CD4-positive, alpha-beta T cell (primary cell): ENCODE measurements at regions of chr6 and their contacts with region 1.

Region 1: DNA sequence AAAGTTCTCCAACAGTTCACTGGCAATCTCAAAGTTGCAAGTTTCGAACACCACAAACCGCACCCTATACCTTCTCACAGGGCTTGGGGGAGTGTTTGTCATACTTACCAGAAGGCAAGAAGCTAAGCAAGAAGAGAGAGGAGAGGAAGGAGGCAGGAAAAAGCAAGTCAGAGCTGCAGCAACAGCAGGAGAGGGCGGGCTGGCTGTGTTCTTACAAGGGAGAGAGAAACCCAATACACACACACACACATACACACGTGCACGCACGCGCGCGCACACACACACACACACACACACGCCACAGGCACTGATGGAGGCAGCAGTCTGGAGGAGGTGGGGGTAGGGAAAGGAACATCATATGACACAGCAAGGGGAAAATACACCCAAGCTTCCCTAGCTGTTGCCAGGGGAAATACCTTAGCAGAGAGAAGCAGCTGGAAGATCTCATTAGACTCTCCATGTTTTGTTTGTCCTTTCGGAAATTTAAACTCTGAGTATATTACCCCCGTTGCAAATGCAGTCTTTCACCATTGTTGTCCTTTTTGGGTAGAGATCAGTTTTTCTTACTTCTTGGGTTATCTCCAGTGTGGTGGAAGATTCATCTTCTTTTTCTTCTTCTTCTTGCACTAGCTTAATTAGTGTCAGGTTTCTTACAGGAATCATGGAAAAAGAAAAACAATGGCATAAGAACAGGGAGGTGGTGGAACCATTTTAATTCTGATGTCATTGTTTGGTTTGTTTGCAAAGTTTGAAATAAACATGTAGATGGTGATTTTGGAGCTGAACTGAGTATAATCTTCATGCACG is at the start of gene TXLNB:
- DNase-seq: peak; percentile 66 to 93 (median 78)
- ATAC-seq: peak; percentile 94
- H3K4me3 ChIP-seq: peak within 1 kb of the TSS; percentile 34
- H3K4me3 Mint-ChIP-seq: peak within 1 kb of the TSS; percentile 83
- H3K27ac ChIP-seq: peak within 1 kb of the TSS; percentile 68 to 80
- H3K27ac Mint-ChIP-seq: peak within 1 kb of the TSS; percentile 84
- H3K4me1 ChIP-seq: peaks cover 47% of the 10 kb centered on the region
- H3K4me1 Mint-ChIP-seq: peaks cover 62% of the 10 kb centered on the region
- H3K27me3 ChIP-seq: no peaks in the 10 kb centered on the region
- H3K27me3 Mint-ChIP-seq: no peaks in the 10 kb centered on the region
- CTCF ChIP-seq: no peak
- total RNA-seq, gene TXLNB: 0.17 to 0.19 TPM

Region 2: GRCh38 chr6:139124887-139125672 is 166.9 kb before region 1 on chr6:
- CTCF ChIA-PET with region 1: interaction called, 13 read pairs
- POLR2A ChIA-PET with region 1: interaction called, 12 read pairs
- intact Hi-C with region 1: loop called in 1 of 2 experiments (anchors 5 kb)
- DNase-seq: peak; percentile 60 to 95 (median 76)
- ATAC-seq: peak; percentile 98
- H3K4me3 ChIP-seq: peak overlapping the region; percentile 1
- H3K4me3 Mint-ChIP-seq: peak overlapping the region; percentile 66
- H3K27ac ChIP-seq: peak overlapping the region; percentile 64 to 66
- H3K27ac Mint-ChIP-seq: peak overlapping the region; percentile 88
- H3K4me1 ChIP-seq: peaks cover 40% of the 10 kb centered on the region
- H3K4me1 Mint-ChIP-seq: peaks cover 57% of the 10 kb centered on the region
- H3K27me3 ChIP-seq: no peaks in the 10 kb centered on the region
- H3K27me3 Mint-ChIP-seq: no peaks in the 10 kb centered on the region
- CTCF ChIP-seq: peak; percentile 80

Region 3: GRCh38 chr6:139187489-139187888 is 104.5 kb before region 1 on chr6:
- CTCF ChIA-PET with region 1: no interaction called
- POLR2A ChIA-PET with region 1: no interaction called
- intact Hi-C with region 1: no loop called
- DNase-seq: no peak
- ATAC-seq: no peak
- H3K4me3 ChIP-seq: no peak overlapping the region
- H3K4me3 Mint-ChIP-seq: no peak overlapping the region
- H3K27ac ChIP-seq: no peak overlapping the region
- H3K27ac Mint-ChIP-seq: peak overlapping the region; percentile 1
- H3K4me1 ChIP-seq: peaks cover 3% of the 10 kb centered on the region
- H3K4me1 Mint-ChIP-seq: peaks cover 57% of the 10 kb centered on the region
- H3K27me3 ChIP-seq: no peaks in the 10 kb centered on the region
- H3K27me3 Mint-ChIP-seq: no peaks in the 10 kb centered on the region
- CTCF ChIP-seq: no peak

Region 4: GRCh38 chr6:139219271-139219729 is 72.7 kb before region 1 on chr6:
- CTCF ChIA-PET with region 1: interaction called, 7 read pairs
- POLR2A ChIA-PET with region 1: interaction called, 20 read pairs
- intact Hi-C with region 1: loop called in 1 of 2 experiments (anchors 5 kb)
- DNase-seq: peak; percentile 47 to 87 (median 68)
- ATAC-seq: peak; percentile 98
- H3K4me3 ChIP-seq: no peak overlapping the region
- H3K4me3 Mint-ChIP-seq: no peak overlapping the region
- H3K27ac ChIP-seq: no peak overlapping the region
- H3K27ac Mint-ChIP-seq: peak overlapping the region; percentile 1
- H3K4me1 ChIP-seq: peaks cover 8% of the 10 kb centered on the region
- H3K4me1 Mint-ChIP-seq: peaks cover 16% of the 10 kb centered on the region
- H3K27me3 ChIP-seq: no peaks in the 10 kb centered on the region
- H3K27me3 Mint-ChIP-seq: no peaks in the 10 kb centered on the region
- CTCF ChIP-seq: peak; percentile 85

Region 5: GRCh38 chr6:139256087-139256486 is 35.9 kb before region 1 on chr6:
- CTCF ChIA-PET with region 1: no interaction called
- POLR2A ChIA-PET with region 1: interaction called, 38 read pairs
- intact Hi-C with region 1: loop called (anchors 5 kb)
- DNase-seq: no peak
- ATAC-seq: no peak
- H3K4me3 ChIP-seq: no peak overlapping the region
- H3K4me3 Mint-ChIP-seq: no peak overlapping the region
- H3K27ac ChIP-seq: no peak overlapping the region
- H3K27ac Mint-ChIP-seq: no peak overlapping the region
- H3K4me1 ChIP-seq: peaks cover 46% of the 10 kb centered on the region
- H3K4me1 Mint-ChIP-seq: peaks cover 43% of the 10 kb centered on the region
- H3K27me3 ChIP-seq: no peaks in the 10 kb centered on the region
- H3K27me3 Mint-ChIP-seq: no peaks in the 10 kb centered on the region
- CTCF ChIP-seq: no peak

Region 6: DNA sequence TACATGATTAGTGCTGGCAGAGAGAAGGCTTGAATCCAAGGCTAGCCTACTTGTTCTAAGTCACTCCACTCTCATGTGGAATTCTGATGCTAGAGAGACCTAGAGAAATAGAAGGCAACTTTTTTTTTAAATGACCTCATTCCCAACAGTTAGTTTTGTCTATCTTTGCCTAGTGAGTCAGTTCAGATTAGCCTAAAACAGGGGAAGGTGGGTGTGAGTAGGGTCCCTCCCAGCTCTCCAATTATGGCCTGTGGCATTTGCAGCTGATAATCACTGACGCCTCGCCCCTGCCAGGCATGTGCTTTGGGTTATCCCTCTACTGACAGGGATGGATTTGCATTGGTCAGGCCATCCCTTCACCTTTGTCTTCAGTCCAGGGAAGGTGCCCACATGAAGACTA is 13.8 kb before region 1 on chr6:
- CTCF ChIA-PET with region 1: no interaction called
- POLR2A ChIA-PET with region 1: interaction called, 13 read pairs
- intact Hi-C with region 1: no loop called
- DNase-seq: no peak
- ATAC-seq: no peak
- H3K4me3 ChIP-seq: no peak overlapping the region
- H3K4me3 Mint-ChIP-seq: no peak overlapping the region
- H3K27ac ChIP-seq: no peak overlapping the region
- H3K27ac Mint-ChIP-seq: no peak overlapping the region
- H3K4me1 ChIP-seq: peaks cover 12% of the 10 kb centered on the region
- H3K4me1 Mint-ChIP-seq: peaks cover 37% of the 10 kb centered on the region
- H3K27me3 ChIP-seq: no peaks in the 10 kb centered on the region
- H3K27me3 Mint-ChIP-seq: no peaks in the 10 kb centered on the region
- CTCF ChIP-seq: no peak

Region 7: DNA sequence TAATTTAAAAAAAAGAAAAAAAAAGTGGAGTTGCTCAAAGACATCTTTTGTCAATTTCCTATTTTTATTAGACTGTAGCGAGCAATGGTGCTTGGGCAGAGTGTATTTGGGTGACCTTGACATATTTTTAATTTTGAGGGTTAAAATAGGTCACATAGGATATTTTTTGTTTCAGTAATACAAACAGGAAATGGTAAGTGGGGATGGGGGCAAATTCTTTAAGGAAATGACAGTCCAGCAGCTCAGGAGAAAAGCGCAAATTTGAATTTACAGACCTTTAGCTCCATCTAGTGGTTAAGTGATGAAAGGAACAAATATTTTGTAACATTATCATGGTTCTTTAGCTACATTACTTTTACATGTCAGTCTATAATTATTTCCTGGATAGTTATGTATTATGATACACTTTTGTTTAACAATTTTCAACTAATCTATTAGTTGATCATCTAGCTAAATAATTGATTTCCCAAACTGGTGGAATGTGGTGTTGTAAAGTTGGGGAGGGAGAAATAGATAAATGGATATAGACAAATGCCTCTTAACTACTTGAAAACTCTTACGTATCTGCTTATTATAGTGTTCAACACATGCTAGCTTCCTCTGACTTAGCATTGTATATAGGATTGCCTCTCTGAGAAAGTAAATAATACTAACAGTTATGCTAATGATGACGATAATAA is 72.4 kb after region 1 on chr6:
- CTCF ChIA-PET with region 1: interaction called, 7 read pairs
- POLR2A ChIA-PET with region 1: interaction called, 10 read pairs
- intact Hi-C with region 1: loop called in 1 of 2 experiments (anchors 2 kb)
- DNase-seq: peak in 3 of 14 experiments; percentile 72 to 75 (median 72)
- ATAC-seq: peak; percentile 59
- H3K4me3 ChIP-seq: no peak overlapping the region
- H3K4me3 Mint-ChIP-seq: no peak overlapping the region
- H3K27ac ChIP-seq: no peak overlapping the region
- H3K27ac Mint-ChIP-seq: no peak overlapping the region
- H3K4me1 ChIP-seq: peaks cover 9% of the 10 kb centered on the region
- H3K4me1 Mint-ChIP-seq: peaks cover 58% of the 10 kb centered on the region
- H3K27me3 ChIP-seq: no peaks in the 10 kb centered on the region
- H3K27me3 Mint-ChIP-seq: no peaks in the 10 kb centered on the region
- CTCF ChIP-seq: peak; percentile 91